ENCODE measurements at regions of chr18 and their contacts with region 1.

Region 1: DNA sequence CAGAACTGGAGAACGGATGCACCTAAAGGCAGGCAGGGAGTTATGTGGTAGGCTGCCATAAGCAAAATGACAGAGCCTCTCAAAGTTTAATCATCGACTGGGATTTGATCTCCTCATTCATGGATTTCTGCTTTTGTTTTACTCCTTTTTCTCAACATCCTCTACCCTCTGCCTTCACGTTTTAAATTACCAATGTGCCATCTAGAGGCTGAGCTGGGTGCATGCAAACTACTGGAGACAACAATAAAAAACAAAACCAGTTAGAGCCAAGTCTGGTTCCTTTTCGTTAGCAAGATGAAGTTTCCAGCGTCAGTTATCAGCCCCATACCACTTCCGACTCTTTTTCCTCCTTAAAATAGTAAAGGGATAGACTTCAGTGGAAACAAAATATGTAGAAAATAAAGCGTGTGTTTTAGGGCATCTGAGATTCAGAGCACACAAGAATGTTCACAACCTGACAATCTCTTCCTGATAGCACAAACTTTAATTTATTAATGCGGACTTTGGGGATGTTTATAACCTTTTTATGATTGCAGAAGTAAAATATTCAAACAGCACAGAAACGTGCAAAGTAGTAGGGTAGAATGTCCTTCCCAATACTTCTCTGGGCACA is 117.0 kb downstream of the LAMA1 start:
- DNase-seq: no peak

Region 2: DNA sequence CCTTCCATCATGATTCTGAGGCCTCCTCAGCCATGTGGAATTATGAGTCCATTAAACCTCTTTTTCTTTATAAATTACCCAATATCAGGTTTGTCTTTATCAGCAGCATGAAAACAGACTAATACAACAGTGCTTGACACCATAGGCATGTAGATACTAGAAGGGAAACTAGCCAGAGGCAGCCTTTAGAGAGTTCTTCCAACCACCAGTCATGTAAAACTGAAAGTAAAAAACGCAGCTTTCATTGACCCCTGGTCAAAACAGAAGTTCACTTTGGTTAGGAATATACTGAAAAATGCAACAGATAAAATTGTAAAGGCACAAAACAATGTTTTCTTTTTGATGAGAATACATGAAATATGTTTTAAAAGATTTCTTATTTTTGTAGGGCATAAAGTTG is 463.1 kb before region 1 on chr18:
- intact Hi-C with region 1: loop called in 1 of 2 experiments (anchors 10 kb)
- DNase-seq: no peak